CD8-positive, alpha-beta T cell (primary cell): ENCODE measurements at regions of chr2 and their contacts with region 1.

Region 1: GRCh38 chr2:201231781-201232466 is 28.4 kb upstream of the CASP8 start:
- DNase-seq: peak; percentile 77 to 96 (median 92)
- ATAC-seq: peak; percentile 46
- H3K4me3 ChIP-seq: peak overlapping the region in 1 of 2 experiments; percentile 4
- H3K4me3 Mint-ChIP-seq: peak overlapping the region; percentile 58
- H3K27ac ChIP-seq: peak overlapping the region in 1 of 2 experiments; percentile 47
- H3K27ac Mint-ChIP-seq: peak overlapping the region; percentile 89
- H3K4me1 ChIP-seq: peaks cover 40% of the 10 kb centered on the region
- H3K4me1 Mint-ChIP-seq: peaks cover 60% of the 10 kb centered on the region
- H3K27me3 ChIP-seq: no peaks in the 10 kb centered on the region
- H3K27me3 Mint-ChIP-seq: no peaks in the 10 kb centered on the region
- CTCF ChIP-seq: peak; percentile 91

Region 2: DNA sequence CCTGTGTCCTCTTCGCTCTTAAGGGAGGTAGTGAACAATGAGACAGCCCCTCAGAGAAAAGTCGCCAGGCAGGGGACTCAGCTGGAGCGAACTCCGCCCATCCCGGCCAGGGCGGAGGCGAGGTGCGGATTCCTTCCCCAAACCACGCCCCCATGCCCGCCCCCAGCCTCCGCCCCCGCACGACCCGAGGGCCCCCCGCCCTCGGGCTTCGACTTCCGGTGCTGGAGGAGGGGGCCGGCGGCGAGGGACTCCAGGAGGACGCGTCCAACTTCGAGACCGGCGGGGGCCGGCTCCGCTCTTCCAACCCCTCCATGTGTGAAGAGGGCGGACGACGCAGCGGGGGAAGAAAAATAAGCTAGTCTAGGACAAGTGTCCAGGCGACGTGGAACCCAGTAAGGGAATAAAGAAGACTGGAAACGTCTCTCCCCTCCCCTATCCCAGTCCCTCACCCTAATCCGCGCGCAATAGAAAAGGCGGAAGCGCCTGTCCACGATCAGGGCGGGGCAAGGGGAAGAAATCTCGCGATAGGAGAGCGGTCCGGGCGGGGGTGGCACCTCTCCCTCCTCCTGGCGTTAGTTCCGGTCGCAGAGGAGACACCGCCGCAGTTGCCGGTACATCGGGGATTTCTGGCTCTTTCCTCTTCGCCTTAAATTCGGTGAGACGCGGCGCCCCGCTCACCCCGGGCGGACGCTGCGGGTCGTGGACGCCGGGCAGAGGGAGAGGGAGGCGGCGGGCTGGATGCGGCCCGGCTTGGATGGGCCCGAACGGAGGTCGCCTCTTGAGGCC is 420.4 kb before region 1 on chr2 and contains the start of gene BZW1:
- CTCF ChIA-PET with region 1: interaction called, 3 read pairs
- POLR2A ChIA-PET with region 1: interaction called, 3 read pairs
- intact Hi-C with region 1: loop called in 1 of 2 experiments (anchors 1 kb)
- DNase-seq: peak; percentile 94 to 98 (median 97)
- ATAC-seq: peak; percentile 82
- H3K4me3 ChIP-seq: peak within 1 kb of the TSS; percentile 69 to 90
- H3K4me3 Mint-ChIP-seq: peak within 1 kb of the TSS; percentile 99
- H3K27ac ChIP-seq: peak within 1 kb of the TSS; percentile 98
- H3K27ac Mint-ChIP-seq: peak within 1 kb of the TSS; percentile 98
- H3K4me1 ChIP-seq: peaks cover 33% of the 10 kb centered on the region
- H3K4me1 Mint-ChIP-seq: peaks cover 48% of the 10 kb centered on the region
- H3K27me3 ChIP-seq: no peaks in the 10 kb centered on the region
- H3K27me3 Mint-ChIP-seq: no peaks in the 10 kb centered on the region
- CTCF ChIP-seq: no peak
- total RNA-seq, gene BZW1: 330 to 338 TPM

Region 3: GRCh38 chr2:200963124-200963917 is 268.6 kb before region 1 on chr2 and contains the start of gene ORC2:
- CTCF ChIA-PET with region 1: interaction called, 5 read pairs
- POLR2A ChIA-PET with region 1: interaction called, 3 read pairs
- intact Hi-C with region 1: loop called (anchors 2 to 5 kb)
- DNase-seq: peak; percentile 84 to 96 (median 93)
- ATAC-seq: peak; percentile 94
- H3K4me3 ChIP-seq: peak within 1 kb of the TSS; percentile 70 to 90
- H3K4me3 Mint-ChIP-seq: peak within 1 kb of the TSS; percentile 99
- H3K27ac ChIP-seq: peak within 1 kb of the TSS; percentile 76 to 90
- H3K27ac Mint-ChIP-seq: peak within 1 kb of the TSS; percentile 99
- H3K4me1 ChIP-seq: peaks cover 30% of the 10 kb centered on the region
- H3K4me1 Mint-ChIP-seq: peaks cover 57% of the 10 kb centered on the region
- H3K27me3 ChIP-seq: no peaks in the 10 kb centered on the region
- H3K27me3 Mint-ChIP-seq: no peaks in the 10 kb centered on the region
- CTCF ChIP-seq: peak; percentile 51
- total RNA-seq, gene ORC2: 17.7 to 21.3 TPM

Region 4: DNA sequence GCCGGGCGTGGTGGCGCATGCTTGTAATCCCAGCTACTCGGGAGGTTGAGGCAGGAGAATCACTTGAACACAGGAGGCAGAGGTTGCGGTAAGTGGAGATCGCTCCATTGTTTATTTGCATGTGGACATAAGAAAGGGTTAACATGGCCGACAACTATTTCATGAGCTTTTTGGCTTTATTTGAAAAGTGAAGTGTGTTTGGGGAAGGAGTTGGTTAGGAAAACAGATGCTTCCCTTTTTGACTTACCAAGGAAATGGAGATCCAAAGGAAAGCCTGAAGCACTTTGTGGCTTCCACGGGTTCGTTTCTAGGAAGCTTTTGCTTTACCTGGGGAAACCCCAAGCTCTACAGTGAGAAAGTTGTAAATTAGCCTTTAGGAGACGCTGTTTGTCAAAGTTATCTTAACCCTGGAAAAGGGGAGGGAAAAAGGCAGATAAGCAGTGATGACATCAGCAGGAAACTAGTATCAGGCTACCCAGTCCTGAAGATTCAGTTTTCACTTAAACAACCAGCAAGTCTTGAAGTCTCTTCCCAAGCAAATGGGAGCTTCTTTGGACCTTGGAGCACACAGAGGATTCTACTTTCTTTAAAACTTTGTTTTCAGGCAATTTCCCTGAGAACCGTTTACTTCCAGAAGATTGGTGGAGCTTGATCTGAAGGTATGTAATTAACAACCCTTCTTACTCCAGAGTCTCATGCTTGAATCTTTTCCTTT is 49.1 kb before region 1 on chr2 and contains the start of gene CASP10:
- CTCF ChIA-PET with region 1: interaction called, 147 read pairs
- POLR2A ChIA-PET with region 1: interaction called, 37 read pairs
- intact Hi-C with region 1: loop called (anchors 1 kb)
- DNase-seq: peak in 5 of 9 experiments; percentile 17 to 89 (median 23)
- ATAC-seq: peak; percentile 87
- H3K4me3 ChIP-seq: peak within 1 kb of the TSS; percentile 57 to 60
- H3K4me3 Mint-ChIP-seq: peak within 1 kb of the TSS; percentile 94
- H3K27ac ChIP-seq: peak within 1 kb of the TSS; percentile 58 to 78
- H3K27ac Mint-ChIP-seq: peak within 1 kb of the TSS; percentile 95
- H3K4me1 ChIP-seq: peaks cover 25% of the 10 kb centered on the region
- H3K4me1 Mint-ChIP-seq: peaks cover 45% of the 10 kb centered on the region
- H3K27me3 ChIP-seq: no peaks in the 10 kb centered on the region
- H3K27me3 Mint-ChIP-seq: no peaks in the 10 kb centered on the region
- CTCF ChIP-seq: peak; percentile 48
- total RNA-seq, gene CASP10: 9.8 to 10.4 TPM

Region 5: GRCh38 chr2:201257956-201258665 is 26.2 kb after region 1 on chr2:
- CTCF ChIA-PET with region 1: interaction called, 76 read pairs
- POLR2A ChIA-PET with region 1: interaction called, 35 read pairs
- intact Hi-C with region 1: loop called (anchors 1 kb)
- DNase-seq: peak; percentile 87 to 99 (median 94)
- ATAC-seq: peak; percentile 69
- H3K4me3 ChIP-seq: peak overlapping the region; percentile 45 to 48
- H3K4me3 Mint-ChIP-seq: peak overlapping the region; percentile 89
- H3K27ac ChIP-seq: peak overlapping the region; percentile 85 to 93
- H3K27ac Mint-ChIP-seq: peak overlapping the region; percentile 97
- H3K4me1 ChIP-seq: peaks cover 68% of the 10 kb centered on the region
- H3K4me1 Mint-ChIP-seq: peaks cover 75% of the 10 kb centered on the region
- H3K27me3 ChIP-seq: no peaks in the 10 kb centered on the region
- H3K27me3 Mint-ChIP-seq: no peaks in the 10 kb centered on the region
- CTCF ChIP-seq: no peak

Region 6: GRCh38 chr2:201363857-201364560 is 132.1 kb after region 1 on chr2:
- CTCF ChIA-PET with region 1: interaction called, 87 read pairs
- POLR2A ChIA-PET with region 1: interaction called, 13 read pairs
- intact Hi-C with region 1: loop called (anchors 1 kb)
- DNase-seq: peak in 5 of 9 experiments; percentile 12 to 75 (median 60)
- ATAC-seq: peak; percentile 98
- H3K4me3 ChIP-seq: no peak overlapping the region
- H3K4me3 Mint-ChIP-seq: no peak overlapping the region
- H3K27ac ChIP-seq: no peak overlapping the region
- H3K27ac Mint-ChIP-seq: peak overlapping the region; percentile 37
- H3K4me1 ChIP-seq: peaks cover 31% of the 10 kb centered on the region
- H3K4me1 Mint-ChIP-seq: peaks cover 34% of the 10 kb centered on the region
- H3K27me3 ChIP-seq: no peaks in the 10 kb centered on the region
- H3K27me3 Mint-ChIP-seq: no peaks in the 10 kb centered on the region
- CTCF ChIP-seq: peak; percentile 87

Region 7: DNA sequence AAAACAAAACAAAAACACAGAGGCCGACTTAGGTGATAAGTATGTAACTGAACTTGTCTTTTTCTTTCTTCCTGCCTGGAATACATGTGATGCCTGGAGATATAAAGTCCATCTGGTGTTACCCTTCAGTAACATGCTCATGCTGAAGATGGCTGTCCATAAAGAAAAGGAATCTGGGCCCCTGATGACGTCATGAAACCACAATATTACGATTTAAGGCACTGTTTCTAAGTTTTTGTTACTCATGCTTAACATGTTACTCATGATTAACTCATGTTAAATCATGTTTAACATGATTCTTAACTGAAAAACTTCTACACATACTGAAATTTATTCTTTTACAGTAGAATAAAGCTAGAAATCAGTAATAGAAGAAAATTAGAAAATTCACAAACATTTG is 268.6 kb after region 1 on chr2:
- CTCF ChIA-PET with region 1: no interaction called
- POLR2A ChIA-PET with region 1: no interaction called
- intact Hi-C with region 1: no loop called
- DNase-seq: no peak
- ATAC-seq: no peak
- H3K4me3 ChIP-seq: no peak overlapping the region
- H3K4me3 Mint-ChIP-seq: no peak overlapping the region
- H3K27ac ChIP-seq: no peak overlapping the region
- H3K27ac Mint-ChIP-seq: no peak overlapping the region
- H3K4me1 ChIP-seq: no peaks in the 10 kb centered on the region
- H3K4me1 Mint-ChIP-seq: no peaks in the 10 kb centered on the region
- H3K27me3 ChIP-seq: no peaks in the 10 kb centered on the region
- H3K27me3 Mint-ChIP-seq: no peaks in the 10 kb centered on the region
- CTCF ChIP-seq: no peak

Region 8: DNA sequence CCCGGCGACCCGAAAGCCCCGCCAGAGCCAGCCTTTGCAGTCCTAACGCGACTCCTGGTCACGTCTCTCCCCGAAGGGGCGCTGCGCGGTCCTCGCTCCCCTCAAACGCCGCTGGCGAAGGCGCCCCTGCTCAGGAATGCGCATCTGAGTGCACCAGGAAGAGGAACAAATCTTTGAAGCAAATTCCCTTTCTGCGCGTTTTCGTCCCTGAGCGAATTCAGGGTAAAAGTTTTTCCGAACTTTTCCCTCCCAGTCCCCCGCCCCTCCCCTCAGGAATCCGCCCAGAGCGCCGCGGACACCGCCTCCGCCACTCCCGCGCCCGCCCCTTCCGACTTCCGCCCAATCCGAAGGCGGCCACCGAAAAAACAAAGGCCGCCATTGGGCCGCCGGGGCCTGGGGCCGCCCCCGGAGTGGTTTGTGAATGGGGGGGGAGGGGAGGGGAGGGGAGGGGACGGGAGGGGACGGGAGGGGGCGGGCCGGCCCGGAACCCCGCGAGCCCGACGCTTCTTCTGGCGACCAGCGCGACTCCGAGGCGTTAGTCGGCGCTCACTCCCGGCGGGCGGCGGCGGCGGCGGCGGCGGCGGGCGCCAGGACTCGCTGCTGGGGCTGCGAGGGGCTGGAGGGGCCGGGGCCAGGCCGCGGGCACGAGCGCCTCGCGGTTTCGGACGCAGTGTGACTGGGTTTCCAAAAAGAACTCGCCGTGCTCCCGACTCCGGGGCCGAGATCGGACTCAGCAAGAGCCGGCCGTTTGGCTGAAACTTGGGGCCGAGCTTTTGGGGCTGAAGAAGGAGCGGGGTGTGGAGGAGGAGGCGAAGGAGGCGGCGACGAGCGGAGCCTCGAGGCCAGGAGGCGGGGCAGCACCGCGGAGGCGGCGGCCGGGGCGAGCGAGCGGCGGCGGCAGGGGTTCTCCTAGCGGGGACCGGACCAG is 801.7 kb after region 1 on chr2 and contains the start of gene FZD7:
- CTCF ChIA-PET with region 1: no interaction called
- POLR2A ChIA-PET with region 1: no interaction called
- intact Hi-C with region 1: loop called in 1 of 2 experiments (anchors 10 kb)
- DNase-seq: peak; percentile 66 to 91 (median 83)
- ATAC-seq: peak; percentile 78
- H3K4me3 ChIP-seq: peak within 1 kb of the TSS; percentile 77 to 84
- H3K4me3 Mint-ChIP-seq: peak within 1 kb of the TSS; percentile 88
- H3K27ac ChIP-seq: peak within 1 kb of the TSS in 1 of 2 experiments; percentile 14
- H3K27ac Mint-ChIP-seq: no peak within 1 kb of the TSS
- H3K4me1 ChIP-seq: peaks cover 25% of the 10 kb centered on the region
- H3K4me1 Mint-ChIP-seq: peaks cover 13% of the 10 kb centered on the region
- H3K27me3 ChIP-seq: peaks cover 26 to 29% of the 10 kb centered on the region in 2 experiments
- H3K27me3 Mint-ChIP-seq: peaks cover 12% of the 10 kb centered on the region
- CTCF ChIP-seq: no peak
- total RNA-seq, gene FZD7: 0.73 to 0.97 TPM

Region 9: DNA sequence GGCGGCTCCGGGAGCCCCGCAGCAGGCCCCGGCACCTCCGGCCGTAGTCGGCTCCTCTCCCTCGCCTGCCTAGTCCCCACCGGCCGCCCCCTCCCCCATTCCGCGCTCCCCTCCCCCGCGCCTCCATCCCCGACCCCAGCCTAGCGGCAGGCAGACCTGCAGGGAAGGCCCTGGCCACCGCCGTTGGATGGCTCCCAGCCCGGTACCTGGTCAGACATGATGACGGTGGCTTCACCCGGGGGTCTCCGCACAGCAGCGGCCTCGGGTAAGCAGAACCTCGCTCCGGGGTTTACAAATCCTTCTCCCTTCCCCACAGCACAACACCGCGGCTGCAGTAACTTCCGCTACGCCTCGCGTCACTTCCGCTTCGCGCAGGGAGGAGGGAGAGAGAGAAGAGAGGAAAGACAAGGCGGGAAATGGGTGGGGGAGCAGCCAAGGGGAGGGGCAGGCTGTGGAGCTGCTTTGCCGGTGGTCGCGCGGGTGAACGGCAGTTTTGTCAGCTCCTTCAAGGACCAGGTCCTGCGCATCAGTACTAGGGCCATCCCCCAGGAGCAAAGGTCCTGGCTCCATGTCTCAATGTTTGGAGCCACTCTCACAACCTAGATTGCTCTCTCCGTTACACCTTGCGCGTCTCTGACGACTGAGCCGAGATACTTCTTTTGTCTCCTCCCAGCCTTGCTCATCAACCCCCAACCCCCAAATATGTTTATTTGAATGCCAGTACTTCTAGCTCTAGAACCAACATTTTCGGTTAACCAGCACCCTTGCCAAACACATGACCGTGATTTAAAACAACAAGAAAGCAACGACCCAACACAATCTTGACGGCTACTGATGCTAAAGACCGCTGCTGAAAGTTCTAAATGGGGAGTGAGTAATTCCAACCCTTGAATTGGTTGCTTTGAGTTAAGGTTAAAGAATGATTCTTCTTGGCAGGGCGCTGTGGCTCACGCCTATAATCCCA is 1006.6 kb after region 1 on chr2 and contains the start of gene SUMO1:
- CTCF ChIA-PET with region 1: no interaction called
- POLR2A ChIA-PET with region 1: no interaction called
- intact Hi-C with region 1: no loop called
- DNase-seq: peak; percentile 79 to 95 (median 92)
- ATAC-seq: peak; percentile 93
- H3K4me3 ChIP-seq: peak within 1 kb of the TSS; percentile 82 to 83
- H3K4me3 Mint-ChIP-seq: peak within 1 kb of the TSS; percentile 99
- H3K27ac ChIP-seq: peak within 1 kb of the TSS; percentile 82
- H3K27ac Mint-ChIP-seq: peak within 1 kb of the TSS; percentile 99
- H3K4me1 ChIP-seq: peaks cover 15% of the 10 kb centered on the region
- H3K4me1 Mint-ChIP-seq: peaks cover 43% of the 10 kb centered on the region
- H3K27me3 ChIP-seq: no peaks in the 10 kb centered on the region
- H3K27me3 Mint-ChIP-seq: no peaks in the 10 kb centered on the region
- CTCF ChIP-seq: no peak
- total RNA-seq, gene SUMO1: 86.1 to 87.4 TPM